KBM-7 (cell line): ENCODE measurements at regions of chr1 and their contacts with region 1.

Region 1: GRCh38 chr1:167059045-167059808 is 30.9 kb downstream of the GPA33 start:
- DNase-seq: peak; percentile 92

Region 2: GRCh38 chr1:166910396-166910994 is 148.7 kb before region 1 on chr1:
- in situ Hi-C with region 1: loop called (anchors 10 kb)
- DNase-seq: peak; percentile 90